ENCODE measurements at regions of chr14 and their contacts with region 1.

Region 1: GRCh38 chr14:92135267-92135666 is 13.5 kb downstream of the CPSF2 start:
- DNase-seq: no peak
- ATAC-seq: no peak
- H3K4me3 Mint-ChIP-seq: no peak overlapping the region
- H3K27ac Mint-ChIP-seq: no peak overlapping the region
- H3K4me1 Mint-ChIP-seq: no peaks in the 10 kb centered on the region
- H3K27me3 Mint-ChIP-seq: no peaks in the 10 kb centered on the region
- CTCF ChIP-seq: no peak

Region 2: GRCh38 chr14:92456215-92457015 is 321.1 kb after region 1 on chr14:
- CTCF ChIA-PET with region 1: interaction called, 4 read pairs
- POLR2A ChIA-PET with region 1: interaction called, 4 read pairs
- intact Hi-C with region 1: loop called (anchors 1 kb)
- DNase-seq: no peak
- ATAC-seq: peak; percentile 77
- H3K4me3 Mint-ChIP-seq: no peak overlapping the region
- H3K27ac Mint-ChIP-seq: no peak overlapping the region
- H3K4me1 Mint-ChIP-seq: peaks cover 6% of the 10 kb centered on the region
- H3K27me3 Mint-ChIP-seq: peaks cover 5% of the 10 kb centered on the region
- CTCF ChIP-seq: no peak

Region 3: DNA sequence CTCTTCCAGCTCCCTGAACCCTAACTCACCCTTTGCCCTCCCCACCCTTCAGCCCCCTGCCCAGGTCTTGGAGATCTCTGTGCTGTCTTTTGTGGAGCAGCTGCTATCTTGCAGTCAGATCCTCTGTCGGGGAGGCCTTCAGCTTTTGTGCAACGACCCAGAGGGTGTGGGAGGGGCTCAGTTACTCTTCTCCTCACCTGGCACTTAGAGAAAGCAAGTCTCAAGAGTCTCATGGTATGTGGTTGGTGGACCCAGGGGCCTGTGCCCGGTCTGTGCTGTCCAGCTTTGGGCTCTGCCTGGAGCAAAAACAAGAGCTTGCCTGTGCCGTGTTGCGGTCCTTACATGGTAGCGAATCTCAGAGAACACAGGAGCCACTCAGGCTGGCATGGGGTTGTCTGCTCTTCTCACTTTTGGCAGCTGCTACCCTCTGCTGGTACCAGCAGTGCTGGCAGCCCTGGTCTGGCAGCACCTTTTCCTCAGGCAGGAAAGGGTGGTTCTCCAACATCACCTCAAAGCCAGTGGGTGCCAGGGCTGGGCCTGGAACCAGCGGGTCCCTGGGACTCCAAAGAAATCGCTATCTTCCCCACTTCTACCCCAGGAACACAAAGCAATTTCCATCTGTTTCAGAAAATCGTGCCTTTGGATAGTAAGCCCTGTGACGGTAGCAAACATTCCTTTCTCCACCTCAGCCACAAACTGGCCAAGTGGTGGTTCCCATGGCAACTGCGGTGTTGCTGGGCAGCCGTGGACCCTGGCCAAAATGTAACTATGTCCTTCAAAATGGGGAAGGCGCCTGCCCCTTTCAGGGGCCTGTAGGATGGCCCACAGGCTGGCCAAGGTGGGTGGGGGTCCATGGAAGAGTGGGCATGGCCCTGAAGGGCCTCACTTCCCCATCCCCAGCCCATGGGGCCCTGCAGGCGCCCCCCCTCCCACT is 468.3 kb after region 1 on chr14:
- CTCF ChIA-PET with region 1: no interaction called
- POLR2A ChIA-PET with region 1: no interaction called
- intact Hi-C with region 1: loop called (anchors 5 kb)
- DNase-seq: no peak
- ATAC-seq: peak; percentile 61
- H3K4me3 Mint-ChIP-seq: no peak overlapping the region
- H3K27ac Mint-ChIP-seq: no peak overlapping the region
- H3K4me1 Mint-ChIP-seq: peaks cover 24% of the 10 kb centered on the region
- H3K27me3 Mint-ChIP-seq: no peaks in the 10 kb centered on the region
- CTCF ChIP-seq: no peak

Measured in activated B cell treated with CpG ODN at 0.5 μM for 24 hours (primary cell).